ENCODE measurements at regions of chr4 and their contacts with region 1.

Region 1: DNA sequence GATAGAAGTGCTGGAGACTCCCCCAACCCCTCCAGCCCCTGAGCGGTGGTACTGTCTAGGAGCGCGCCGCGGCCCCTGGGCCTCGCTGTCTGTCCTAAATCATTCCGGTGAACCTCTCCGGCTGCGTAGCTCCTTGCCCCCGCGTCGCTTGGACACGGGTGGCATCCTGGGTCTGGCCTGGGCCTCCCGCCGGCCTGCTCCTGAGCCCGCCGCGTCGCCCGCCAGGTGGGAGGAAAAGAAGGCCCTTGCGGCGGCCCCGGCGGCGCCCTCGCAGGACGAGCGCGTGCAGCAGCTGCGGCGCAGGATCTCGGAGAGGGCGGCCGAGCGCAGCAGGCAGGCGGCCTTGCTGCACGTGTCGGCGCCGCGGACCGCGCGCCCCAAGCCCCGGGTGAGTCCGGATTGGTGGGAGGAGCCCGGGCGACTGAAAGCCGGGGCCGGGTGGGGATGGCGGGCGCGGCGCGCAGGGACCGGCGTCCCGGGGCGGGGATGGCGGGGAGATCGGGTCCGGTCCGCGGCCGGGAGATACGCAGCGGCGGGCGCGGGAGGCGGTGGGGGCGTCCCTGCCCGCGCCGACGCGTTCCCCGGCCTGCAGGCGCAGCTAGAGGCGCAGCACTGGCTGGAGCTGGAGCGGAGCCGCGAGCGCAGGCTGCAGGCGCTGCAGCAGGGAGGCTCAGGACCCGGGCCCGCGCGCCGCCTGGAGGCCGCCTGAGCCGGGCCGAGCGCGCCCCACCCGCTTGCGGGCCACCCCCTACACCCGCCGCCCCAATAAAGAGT is 6.5 kb upstream of the RNF4 start:
- DNase-seq: peak; percentile 86
- ATAC-seq: peak; percentile 92

Region 2: DNA sequence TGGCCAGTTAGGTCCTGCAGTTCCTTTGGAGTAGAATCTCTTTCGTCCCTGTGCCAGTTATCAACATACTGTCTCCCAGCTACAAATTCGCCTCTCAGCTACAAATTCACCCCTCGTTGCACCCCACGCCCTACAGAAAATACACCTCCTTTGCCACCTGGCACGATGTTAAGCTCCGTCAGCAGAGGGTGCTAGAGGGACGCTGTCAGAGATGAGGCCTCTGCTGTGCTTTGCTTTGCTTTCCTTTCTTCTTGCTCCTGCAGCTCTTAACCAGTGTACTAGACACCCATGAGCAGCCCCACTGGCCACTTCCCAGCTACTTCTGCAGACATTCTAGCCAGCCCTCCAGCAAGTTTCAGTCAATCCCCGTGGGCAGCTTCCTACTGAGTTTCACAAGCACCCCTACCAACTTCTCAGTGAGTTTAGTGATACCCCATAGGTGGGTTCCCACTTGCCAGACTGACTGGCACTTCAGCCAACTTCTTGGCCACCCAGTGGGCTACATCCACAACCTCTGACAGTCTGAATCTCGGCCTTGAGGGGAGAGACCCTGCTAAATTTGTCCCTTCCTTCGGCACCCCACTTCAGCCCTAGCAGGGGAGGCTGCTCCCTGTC is 242.3 kb before region 1 on chr4:
- intact Hi-C with region 1: loop called (anchors 2 kb)
- DNase-seq: peak; percentile 80
- ATAC-seq: peak; percentile 85

Region 3: GRCh38 chr4:2412885-2413716 is 49.3 kb before region 1 on chr4:
- intact Hi-C with region 1: loop called (anchors 2 kb)
- DNase-seq: peak; percentile 84
- ATAC-seq: peak; percentile 90

Region 4: GRCh38 chr4:3091464-3091863 is 629.1 kb after region 1 on chr4:
- intact Hi-C with region 1: no loop called
- DNase-seq: no peak
- ATAC-seq: no peak